ENCODE measurements at regions of chr5 and their contacts with region 1.

Region 1: DNA sequence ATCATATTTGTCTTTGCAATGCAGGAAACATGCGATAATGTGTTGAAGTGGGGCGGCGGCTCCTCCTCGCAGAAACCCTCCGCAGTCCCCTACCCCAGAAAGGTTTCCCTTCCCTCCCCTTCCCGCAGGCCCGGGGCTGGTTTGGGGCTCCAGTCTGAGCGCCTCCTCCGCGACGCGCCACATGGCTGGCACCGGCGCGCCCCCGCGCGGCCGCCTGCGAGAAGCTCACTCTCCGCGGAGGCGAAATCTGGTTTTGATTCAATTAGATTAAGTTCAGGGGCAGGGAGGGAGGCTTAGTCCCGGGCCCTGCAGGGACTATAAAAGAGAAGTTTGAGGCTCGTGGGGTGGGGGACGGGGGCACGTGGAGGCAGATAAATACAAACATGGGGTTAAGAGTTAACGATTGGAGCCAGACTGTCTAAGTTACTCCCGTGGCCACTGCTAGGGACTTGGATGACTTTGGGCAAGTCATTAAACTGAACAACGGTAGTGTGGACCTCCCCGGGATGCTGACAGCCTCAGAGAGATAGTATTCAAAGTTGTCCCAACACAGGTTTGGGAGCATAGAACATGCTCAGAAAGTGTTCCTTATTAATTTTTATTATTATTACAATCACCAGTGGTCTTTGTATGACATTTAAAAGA is 69.4 kb downstream of the MSX2 start:
- DNase-seq: peak; percentile 75
- ATAC-seq: peak; percentile 77

Region 2: GRCh38 chr5:174418928-174419796 is 374.6 kb before region 1 on chr5:
- intact Hi-C with region 1: loop called (anchors 10 kb)
- DNase-seq: peak; percentile 94
- ATAC-seq: peak; percentile 95

Region 3: GRCh38 chr5:174680891-174681565 is 112.8 kb before region 1 on chr5:
- intact Hi-C with region 1: no loop called
- DNase-seq: no peak
- ATAC-seq: no peak